ENCODE measurements at regions of chr17 and their contacts with region 1.

Region 1: GRCh38 chr17:3965118-3965803 is 1.0 kb upstream of the ATP2A3 start:
- DNase-seq: peak; percentile 85
- ATAC-seq: peak; percentile 35
- H3K4me3 ChIP-seq: peak overlapping the region; percentile 13 to 98 (median 86)
- H3K4me3 Mint-ChIP-seq: peak overlapping the region; percentile 94
- H3K27ac ChIP-seq: peak overlapping the region; percentile 83 to 88
- H3K27ac Mint-ChIP-seq: peak overlapping the region; percentile 94
- H3K4me1 ChIP-seq: peaks cover 61 to 77% of the 10 kb centered on the region in 2 donors
- H3K4me1 Mint-ChIP-seq: peaks cover 62% of the 10 kb centered on the region
- H3K27me3 ChIP-seq: no peaks in the 10 kb centered on the region
- H3K27me3 Mint-ChIP-seq: no peaks in the 10 kb centered on the region
- CTCF ChIP-seq: no peak

Region 2: GRCh38 chr17:3647769-3648555 is 317.3 kb before region 1 on chr17:
- CTCF ChIA-PET with region 1: no interaction called
- POLR2A ChIA-PET with region 1: no interaction called
- intact Hi-C with region 1: no loop called
- DNase-seq: peak; percentile 55
- ATAC-seq: no peak
- H3K4me3 ChIP-seq: no peak overlapping the region
- H3K4me3 Mint-ChIP-seq: no peak overlapping the region
- H3K27ac ChIP-seq: no peak overlapping the region
- H3K27ac Mint-ChIP-seq: peak overlapping the region; percentile 15
- H3K4me1 ChIP-seq: peaks cover 20 to 28% of the 10 kb centered on the region in 2 donors
- H3K4me1 Mint-ChIP-seq: peaks cover 27% of the 10 kb centered on the region
- H3K27me3 ChIP-seq: no peaks in the 10 kb centered on the region
- H3K27me3 Mint-ChIP-seq: no peaks in the 10 kb centered on the region
- CTCF ChIP-seq: peak; percentile 39

Region 3: GRCh38 chr17:3695723-3696411 is 269.4 kb before region 1 on chr17 and contains the start of gene P2RX5:
- CTCF ChIA-PET with region 1: no interaction called
- POLR2A ChIA-PET with region 1: no interaction called
- intact Hi-C with region 1: loop called (anchors 5 kb)
- DNase-seq: peak; percentile 80
- ATAC-seq: peak; percentile 52
- H3K4me3 ChIP-seq: peak within 1 kb of the TSS; percentile 58 to 93 (median 83)
- H3K4me3 Mint-ChIP-seq: peak within 1 kb of the TSS; percentile 100
- H3K27ac ChIP-seq: peak within 1 kb of the TSS; percentile 76 to 91
- H3K27ac Mint-ChIP-seq: peak within 1 kb of the TSS; percentile 99
- H3K4me1 ChIP-seq: peaks cover 35 to 65% of the 10 kb centered on the region in 2 donors
- H3K4me1 Mint-ChIP-seq: peaks cover 61% of the 10 kb centered on the region
- H3K27me3 ChIP-seq: no peaks in the 10 kb centered on the region
- H3K27me3 Mint-ChIP-seq: no peaks in the 10 kb centered on the region
- CTCF ChIP-seq: no peak
- total RNA-seq, gene P2RX5: 405 and 410 TPM in 2 replicates

Region 4: GRCh38 chr17:3944485-3945388 is 20.5 kb before region 1 on chr17:
- CTCF ChIA-PET with region 1: interaction called, 8 read pairs
- POLR2A ChIA-PET with region 1: interaction called, 4 read pairs
- intact Hi-C with region 1: loop called (anchors 2 kb)
- DNase-seq: peak; percentile 48
- ATAC-seq: peak; percentile 82
- H3K4me3 ChIP-seq: no peak overlapping the region
- H3K4me3 Mint-ChIP-seq: no peak overlapping the region
- H3K27ac ChIP-seq: no peak overlapping the region
- H3K27ac Mint-ChIP-seq: peak overlapping the region; percentile 26
- H3K4me1 ChIP-seq: no peaks in the 10 kb centered on the region
- H3K4me1 Mint-ChIP-seq: no peaks in the 10 kb centered on the region
- H3K27me3 ChIP-seq: no peaks in the 10 kb centered on the region
- H3K27me3 Mint-ChIP-seq: no peaks in the 10 kb centered on the region
- CTCF ChIP-seq: no peak

Region 5: DNA sequence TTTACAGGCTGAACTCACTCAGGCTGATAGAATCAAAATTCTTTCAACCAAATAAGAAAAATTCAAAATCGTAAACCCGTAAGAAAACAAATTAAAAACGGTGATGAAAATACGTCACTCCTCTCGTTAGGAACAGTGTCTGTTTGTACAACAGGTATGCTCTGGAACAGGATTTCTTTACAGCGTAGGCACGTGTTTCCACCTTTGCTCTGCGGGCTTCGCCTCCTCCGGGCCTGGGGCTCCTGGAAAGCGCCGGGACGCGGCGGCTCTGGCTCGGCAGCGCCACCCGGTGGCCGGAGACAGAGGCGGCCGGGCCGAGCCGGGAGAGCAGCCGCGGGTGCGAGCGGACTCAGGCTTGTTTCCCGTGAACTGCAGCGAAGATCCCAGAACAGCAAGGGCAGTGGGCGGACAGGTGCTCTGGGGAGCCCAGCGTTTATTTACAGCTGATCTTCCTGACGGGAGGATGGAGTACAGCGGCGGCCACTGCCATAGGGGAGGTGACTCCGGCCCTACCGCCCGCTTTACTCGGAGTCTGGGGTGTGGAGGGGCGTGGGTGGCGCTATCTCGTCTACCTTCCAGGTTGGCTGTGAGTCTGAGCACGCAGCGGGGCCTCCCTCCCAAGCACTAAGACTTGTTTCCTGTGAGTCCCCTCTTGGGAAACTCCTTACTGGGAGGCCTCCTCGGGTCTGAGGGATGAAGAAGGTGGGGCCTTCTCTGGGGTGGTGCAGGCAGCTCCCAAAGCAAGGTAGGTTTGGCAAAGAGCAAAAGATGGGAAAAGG is 39.4 kb after region 1 on chr17:
- CTCF ChIA-PET with region 1: interaction called, 153 read pairs
- POLR2A ChIA-PET with region 1: interaction called, 7 read pairs
- intact Hi-C with region 1: loop called (anchors 1 kb)
- DNase-seq: peak; percentile 80
- ATAC-seq: peak; percentile 71
- H3K4me3 ChIP-seq: no peak overlapping the region
- H3K4me3 Mint-ChIP-seq: peak overlapping the region; percentile 20
- H3K27ac ChIP-seq: no peak overlapping the region
- H3K27ac Mint-ChIP-seq: no peak overlapping the region
- H3K4me1 ChIP-seq: peaks cover 16 to 35% of the 10 kb centered on the region in 2 donors
- H3K4me1 Mint-ChIP-seq: peaks cover 27% of the 10 kb centered on the region
- H3K27me3 ChIP-seq: no peaks in the 10 kb centered on the region
- H3K27me3 Mint-ChIP-seq: no peaks in the 10 kb centered on the region
- CTCF ChIP-seq: peak; percentile 98

Region 6: DNA sequence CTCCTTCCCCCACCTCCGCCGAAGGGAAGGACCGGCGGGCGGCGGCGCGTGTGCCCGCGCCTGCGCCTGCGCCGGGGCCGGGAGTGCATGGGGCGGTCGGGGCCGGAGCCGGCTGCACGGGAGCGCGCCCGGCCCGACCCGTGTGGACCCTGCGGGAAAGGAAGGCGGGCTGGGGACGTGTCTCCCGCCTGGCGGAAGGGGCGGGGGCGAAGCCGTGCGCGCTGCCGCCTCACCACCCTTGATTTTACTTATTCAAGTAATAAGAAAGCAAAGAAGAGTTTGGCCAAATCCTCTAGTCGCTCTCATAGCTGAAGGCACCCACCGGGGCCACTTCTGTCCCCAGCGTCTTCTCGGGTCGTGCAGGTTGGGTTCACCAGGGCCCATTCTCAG is 983.7 kb after region 1 on chr17:
- CTCF ChIA-PET with region 1: no interaction called
- POLR2A ChIA-PET with region 1: interaction called, 6 read pairs
- intact Hi-C with region 1: loop called (anchors 5 kb)
- DNase-seq: peak; percentile 90
- ATAC-seq: peak; percentile 50
- H3K4me3 ChIP-seq: peak overlapping the region; percentile 59 to 99 (median 96)
- H3K4me3 Mint-ChIP-seq: peak overlapping the region; percentile 98
- H3K27ac ChIP-seq: peak overlapping the region; percentile 73 to 93
- H3K27ac Mint-ChIP-seq: peak overlapping the region; percentile 99
- H3K4me1 ChIP-seq: peaks cover 37 to 45% of the 10 kb centered on the region in 2 donors
- H3K4me1 Mint-ChIP-seq: peaks cover 46% of the 10 kb centered on the region
- H3K27me3 ChIP-seq: no peaks in the 10 kb centered on the region
- H3K27me3 Mint-ChIP-seq: no peaks in the 10 kb centered on the region
- CTCF ChIP-seq: no peak

Measured in B cell (primary cell).